Naive thymus-derived CD4-positive, alpha-beta T cell (primary cell): ENCODE measurements at regions of chr6 and their contacts with region 1.

Region 1: DNA sequence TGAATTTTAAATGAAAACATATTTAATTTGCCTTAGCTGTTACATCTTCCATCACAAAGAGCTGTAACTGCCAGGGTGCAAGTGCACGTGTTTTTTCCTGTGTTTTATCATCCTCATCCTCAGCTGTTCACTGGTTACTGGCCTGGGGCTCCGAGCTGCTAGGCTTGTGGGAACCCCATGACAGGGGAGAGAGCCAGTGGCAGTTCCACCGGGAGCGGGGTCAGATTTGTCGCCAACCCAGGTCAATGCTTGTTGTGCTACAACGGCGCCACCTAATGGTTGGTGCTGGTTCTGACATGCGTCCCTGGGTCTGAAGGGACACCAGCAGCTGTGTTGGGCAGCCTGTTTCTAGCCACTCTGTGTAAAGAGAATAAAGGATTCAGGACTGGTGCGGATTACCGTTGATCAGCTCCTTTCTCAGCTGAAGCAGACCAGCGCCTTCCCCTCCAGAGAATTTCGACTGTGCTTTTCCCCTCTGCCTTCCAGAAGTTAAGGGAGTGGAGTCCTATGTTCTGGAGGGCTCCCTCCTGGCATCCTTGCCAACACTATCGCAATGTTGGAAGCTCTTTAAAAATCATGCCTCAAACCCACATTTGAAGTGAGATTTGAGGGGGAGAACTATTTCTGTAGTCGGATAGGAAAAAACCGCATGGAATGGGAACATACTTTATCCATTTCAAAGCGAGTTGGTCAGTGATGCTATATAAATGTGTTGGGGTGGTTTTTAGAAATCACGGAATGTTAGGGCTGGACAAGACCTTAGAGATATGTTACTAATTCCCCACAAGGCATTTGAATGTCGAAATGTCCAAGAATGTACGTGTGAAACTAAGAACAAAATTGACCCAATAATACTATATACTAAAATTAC is 32.1 kb downstream of the SUMO4 start:
- DNase-seq: peak; percentile 63 to 89 (median 78)
- ATAC-seq: peak; percentile 92
- H3K4me3 ChIP-seq: peak overlapping the region; percentile 44
- H3K4me3 Mint-ChIP-seq: peak overlapping the region; percentile 35 to 84 (median 72)
- H3K27ac ChIP-seq: no peak overlapping the region
- H3K27ac Mint-ChIP-seq: peak overlapping the region in 5 of 9 donors; percentile 25 to 86 (median 67)
- H3K4me1 ChIP-seq: no peaks in the 10 kb centered on the region
- H3K4me1 Mint-ChIP-seq: peaks cover 0 to 20% (median 4%) of the 10 kb centered on the region in 7 donors
- H3K27me3 ChIP-seq: no peaks in the 10 kb centered on the region
- H3K27me3 Mint-ChIP-seq: no peaks in the 10 kb centered on the region

Region 2: GRCh38 chr6:148559848-148560433 is 872.2 kb before region 1 on chr6:
- CTCF ChIA-PET with region 1: no interaction called
- POLR2A ChIA-PET with region 1: no interaction called
- intact Hi-C with region 1: loop called in 1 of 2 experiments (anchors 5 kb)
- DNase-seq: peak; percentile 7 to 73 (median 53)
- ATAC-seq: peak; percentile 91
- H3K4me3 ChIP-seq: peak overlapping the region; percentile 31
- H3K4me3 Mint-ChIP-seq: peak overlapping the region in 5 of 10 donors; percentile 22 to 49 (median 28)
- H3K27ac ChIP-seq: no peak overlapping the region
- H3K27ac Mint-ChIP-seq: no peak overlapping the region
- H3K4me1 ChIP-seq: no peaks in the 10 kb centered on the region
- H3K4me1 Mint-ChIP-seq: peaks cover 0 to 8% (median 7%) of the 10 kb centered on the region in 7 donors
- H3K27me3 ChIP-seq: no peaks in the 10 kb centered on the region
- H3K27me3 Mint-ChIP-seq: peaks cover 21 to 44% (median 33%) of the 10 kb centered on the region in 5 donors

Region 3: GRCh38 chr6:148746363-148747144 is 685.6 kb before region 1 on chr6 and contains the start of gene UST:
- CTCF ChIA-PET with region 1: no interaction called
- POLR2A ChIA-PET with region 1: no interaction called
- intact Hi-C with region 1: loop called (anchors 5 to 10 kb)
- DNase-seq: peak in 7 of 9 donors; percentile 17 to 58 (median 37)
- ATAC-seq: peak; percentile 65
- H3K4me3 ChIP-seq: peak within 1 kb of the TSS; percentile 65
- H3K4me3 Mint-ChIP-seq: peak within 1 kb of the TSS; percentile 86 to 95 (median 90)
- H3K27ac ChIP-seq: no peak within 1 kb of the TSS
- H3K27ac Mint-ChIP-seq: peak within 1 kb of the TSS in 6 of 9 donors; percentile 28 to 82 (median 74)
- H3K4me1 ChIP-seq: peaks cover 0 to 14% of the 10 kb centered on the region in 2 donors
- H3K4me1 Mint-ChIP-seq: peaks cover 12 to 22% (median 16%) of the 10 kb centered on the region in 7 donors
- H3K27me3 ChIP-seq: peaks cover 0 to 10% of the 10 kb centered on the region in 2 donors
- H3K27me3 Mint-ChIP-seq: peaks cover 65 to 80% (median 70%) of the 10 kb centered on the region in 5 donors
- total RNA-seq, gene UST: 0.35 to 2.6 (median 0.46) TPM

Region 4: GRCh38 chr6:149075616-149076364 is 356.4 kb before region 1 on chr6:
- CTCF ChIA-PET with region 1: interaction called, 22 read pairs
- POLR2A ChIA-PET with region 1: no interaction called
- intact Hi-C with region 1: no loop called
- DNase-seq: peak in 2 of 9 donors; percentile 25 to 27
- ATAC-seq: no peak
- H3K4me3 ChIP-seq: no peak overlapping the region
- H3K4me3 Mint-ChIP-seq: peak overlapping the region in 1 of 10 donors; percentile 10
- H3K27ac ChIP-seq: no peak overlapping the region
- H3K27ac Mint-ChIP-seq: peak overlapping the region in 3 of 9 donors; percentile 2 to 60 (median 46)
- H3K4me1 ChIP-seq: no peaks in the 10 kb centered on the region
- H3K4me1 Mint-ChIP-seq: peaks cover 0 to 54% (median 10%) of the 10 kb centered on the region in 7 donors
- H3K27me3 ChIP-seq: no peaks in the 10 kb centered on the region
- H3K27me3 Mint-ChIP-seq: no peaks in the 10 kb centered on the region

Region 5: GRCh38 chr6:149094156-149094555 is 338.0 kb before region 1 on chr6:
- CTCF ChIA-PET with region 1: interaction called, 19 read pairs
- POLR2A ChIA-PET with region 1: no interaction called
- intact Hi-C with region 1: no loop called
- DNase-seq: no peak
- ATAC-seq: no peak
- H3K4me3 ChIP-seq: no peak overlapping the region
- H3K4me3 Mint-ChIP-seq: peak overlapping the region; percentile 13 to 85 (median 66)
- H3K27ac ChIP-seq: peak overlapping the region; percentile 32
- H3K27ac Mint-ChIP-seq: peak overlapping the region; percentile 13 to 98 (median 82)
- H3K4me1 ChIP-seq: peaks cover 26 to 36% of the 10 kb centered on the region in 2 donors
- H3K4me1 Mint-ChIP-seq: peaks cover 25 to 75% (median 52%) of the 10 kb centered on the region in 7 donors
- H3K27me3 ChIP-seq: no peaks in the 10 kb centered on the region
- H3K27me3 Mint-ChIP-seq: no peaks in the 10 kb centered on the region

Region 6: GRCh38 chr6:149190224-149190831 is 241.8 kb before region 1 on chr6:
- CTCF ChIA-PET with region 1: interaction called, 6 read pairs
- POLR2A ChIA-PET with region 1: no interaction called
- intact Hi-C with region 1: loop called in 1 of 2 experiments (anchors 1 kb)
- DNase-seq: peak in 7 of 9 donors; percentile 8 to 38 (median 20)
- ATAC-seq: peak; percentile 40
- H3K4me3 ChIP-seq: no peak overlapping the region
- H3K4me3 Mint-ChIP-seq: no peak overlapping the region
- H3K27ac ChIP-seq: no peak overlapping the region
- H3K27ac Mint-ChIP-seq: peak overlapping the region in 5 of 9 donors; percentile 15 to 83 (median 38)
- H3K4me1 ChIP-seq: peaks cover 0 to 10% of the 10 kb centered on the region in 2 donors
- H3K4me1 Mint-ChIP-seq: peaks cover 11 to 45% (median 18%) of the 10 kb centered on the region in 7 donors
- H3K27me3 ChIP-seq: no peaks in the 10 kb centered on the region
- H3K27me3 Mint-ChIP-seq: no peaks in the 10 kb centered on the region

Region 7: DNA sequence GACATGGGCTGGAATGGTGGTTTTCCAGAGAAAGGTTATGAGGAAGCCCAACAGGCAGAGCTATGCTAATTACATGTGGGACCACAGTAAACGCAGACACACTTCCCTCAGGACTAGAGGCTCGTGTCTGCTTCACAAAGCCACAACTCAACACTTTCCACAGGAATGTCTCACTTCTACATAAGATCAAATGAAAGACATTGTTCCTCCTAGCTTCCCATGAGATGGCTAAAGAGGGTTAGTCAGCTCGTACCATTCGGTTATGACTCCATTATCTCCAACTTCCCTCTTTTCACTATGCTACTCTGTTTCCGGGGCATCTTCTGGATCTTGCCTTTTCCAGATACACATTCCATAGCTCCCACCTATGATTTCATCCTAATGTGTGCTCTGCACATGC is 81.8 kb after region 1 on chr6:
- CTCF ChIA-PET with region 1: interaction called, 37 read pairs
- POLR2A ChIA-PET with region 1: no interaction called
- intact Hi-C with region 1: loop called (anchors 1 kb)
- DNase-seq: no peak
- ATAC-seq: peak; percentile 31
- H3K4me3 ChIP-seq: no peak overlapping the region
- H3K4me3 Mint-ChIP-seq: no peak overlapping the region
- H3K27ac ChIP-seq: no peak overlapping the region
- H3K27ac Mint-ChIP-seq: peak overlapping the region in 7 of 9 donors; percentile 42 to 72 (median 56)
- H3K4me1 ChIP-seq: peaks cover 13 to 16% of the 10 kb centered on the region in 2 donors
- H3K4me1 Mint-ChIP-seq: peaks cover 8 to 44% (median 43%) of the 10 kb centered on the region in 7 donors
- H3K27me3 ChIP-seq: no peaks in the 10 kb centered on the region
- H3K27me3 Mint-ChIP-seq: no peaks in the 10 kb centered on the region